OCI-LY7 (cell line): ENCODE measurements at regions of chr4 and their contacts with region 1.

Region 1: GRCh38 chr4:139030614-139031235 is 15.1 kb downstream of the NOCT start:
- DNase-seq: peak; percentile 86
- H3K4me3 ChIP-seq: no peak overlapping the region
- H3K27ac ChIP-seq: no peak overlapping the region
- H3K4me1 ChIP-seq: peaks cover 11% of the 10 kb centered on the region
- CTCF ChIP-seq: peak; percentile 97

Region 2: DNA sequence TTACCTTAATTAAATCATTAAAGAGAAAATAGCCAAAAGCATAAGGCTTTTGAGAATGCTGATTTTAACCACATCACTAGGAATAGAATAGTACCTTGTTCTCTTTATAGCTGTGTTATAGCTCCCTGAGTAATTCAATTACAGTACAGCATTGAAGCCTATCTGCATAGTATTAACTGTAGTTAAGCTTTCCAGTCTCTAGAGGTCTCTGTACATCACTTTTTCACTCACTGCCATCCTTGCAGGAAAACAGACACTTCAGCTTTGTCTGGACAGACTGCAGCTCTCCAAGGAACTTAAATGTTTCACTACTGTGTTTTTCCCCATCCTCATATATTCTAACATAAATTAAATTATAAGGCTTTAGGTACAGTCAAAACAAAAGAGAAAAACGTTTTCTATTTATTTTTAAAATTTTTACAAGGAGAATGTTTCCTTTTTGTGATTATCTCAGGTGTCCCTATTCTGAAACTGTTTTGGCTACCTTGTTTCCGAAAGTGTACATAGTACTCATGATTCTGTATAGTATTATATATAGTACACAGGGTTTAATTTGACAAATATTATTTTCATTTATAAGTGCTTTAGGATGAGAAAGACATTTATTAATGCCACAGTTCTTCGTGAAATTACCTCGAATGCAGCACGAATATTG is 1906.3 kb before region 1 on chr4:
- CTCF ChIA-PET with region 1: no interaction called
- POLR2A ChIA-PET with region 1: no interaction called
- intact Hi-C with region 1: no loop called
- DNase-seq: peak; percentile 25
- H3K4me3 ChIP-seq: no peak overlapping the region
- H3K27ac ChIP-seq: no peak overlapping the region
- H3K4me1 ChIP-seq: no peaks in the 10 kb centered on the region
- CTCF ChIP-seq: peak; percentile 76

Region 3: GRCh38 chr4:138775890-138776289 is 254.8 kb before region 1 on chr4:
- CTCF ChIA-PET with region 1: no interaction called
- POLR2A ChIA-PET with region 1: no interaction called
- intact Hi-C with region 1: no loop called
- DNase-seq: peak; percentile 6
- H3K4me3 ChIP-seq: no peak overlapping the region
- H3K27ac ChIP-seq: no peak overlapping the region
- H3K4me1 ChIP-seq: no peaks in the 10 kb centered on the region
- CTCF ChIP-seq: no peak

Region 4: DNA sequence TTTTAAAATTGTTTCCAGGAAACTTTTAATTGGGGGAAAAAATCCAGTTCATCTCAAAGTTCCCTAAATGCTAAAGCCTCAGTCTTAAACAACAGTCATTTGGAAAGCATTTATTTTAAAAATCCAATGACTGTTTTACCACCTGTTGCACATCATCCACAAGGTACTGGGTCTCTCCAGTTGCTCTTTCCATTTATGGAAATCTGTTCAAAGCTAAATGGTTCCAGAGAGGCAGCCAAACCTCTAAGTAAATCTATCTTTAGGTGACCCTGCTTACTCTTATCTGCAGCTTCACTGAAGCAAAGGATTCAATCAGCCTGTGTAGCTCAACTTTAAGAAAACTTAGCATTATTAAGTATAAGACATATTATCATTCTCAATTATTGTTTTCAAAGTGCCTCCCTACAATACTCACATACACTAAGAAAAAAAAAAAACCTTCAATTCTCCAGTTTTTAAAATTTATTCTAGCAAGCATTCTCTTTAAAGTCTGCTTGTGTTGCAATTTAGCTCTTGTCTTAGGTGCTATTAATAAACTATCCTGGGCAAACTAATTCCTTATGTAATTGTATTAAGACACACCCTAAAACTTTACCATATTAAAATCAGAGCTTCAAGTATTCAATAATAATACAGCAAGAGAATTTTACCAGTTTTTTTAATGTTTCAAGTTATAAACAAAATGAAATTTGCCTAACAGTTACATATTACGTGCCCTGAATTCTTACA is 45.5 kb after region 1 on chr4:
- CTCF ChIA-PET with region 1: interaction called, 3 read pairs
- POLR2A ChIA-PET with region 1: interaction called, 15 read pairs
- intact Hi-C with region 1: loop called (anchors 5 kb)
- DNase-seq: no peak
- H3K4me3 ChIP-seq: no peak overlapping the region
- H3K27ac ChIP-seq: no peak overlapping the region
- H3K4me1 ChIP-seq: peaks cover 4% of the 10 kb centered on the region
- CTCF ChIP-seq: no peak

Region 5: GRCh38 chr4:139099366-139099982 is 68.7 kb after region 1 on chr4:
- CTCF ChIA-PET with region 1: no interaction called
- POLR2A ChIA-PET with region 1: interaction called, 3 read pairs
- intact Hi-C with region 1: loop called (anchors 2 kb)
- DNase-seq: peak; percentile 90
- H3K4me3 ChIP-seq: no peak overlapping the region
- H3K27ac ChIP-seq: no peak overlapping the region
- H3K4me1 ChIP-seq: peaks cover 4% of the 10 kb centered on the region
- CTCF ChIP-seq: peak; percentile 97

Region 6: GRCh38 chr4:139295206-139295941 is 264.6 kb after region 1 on chr4:
- CTCF ChIA-PET with region 1: no interaction called
- POLR2A ChIA-PET with region 1: interaction called, 3 read pairs
- intact Hi-C with region 1: loop called (anchors 2 kb)
- DNase-seq: peak; percentile 97
- H3K4me3 ChIP-seq: peak overlapping the region; percentile 86
- H3K27ac ChIP-seq: peak overlapping the region; percentile 65
- H3K4me1 ChIP-seq: peaks cover 32% of the 10 kb centered on the region
- CTCF ChIP-seq: peak; percentile 95